ENCODE measurements at regions of chr6 and their contacts with region 1.

Region 1: GRCh38 chr6:126015863-126016262 is 29.5 kb downstream of the TRMT11 start:
- DNase-seq: no peak
- H3K4me3 ChIP-seq: no peak overlapping the region
- H3K27ac ChIP-seq: no peak overlapping the region
- H3K4me1 ChIP-seq: no peaks in the 10 kb centered on the region
- H3K27me3 ChIP-seq: no peaks in the 10 kb centered on the region
- CTCF ChIP-seq: no peak
- EP300 ChIP-seq: no peak
- POLR2A ChIP-seq: no peak
- RAD21 ChIP-seq: no peak

Region 2: DNA sequence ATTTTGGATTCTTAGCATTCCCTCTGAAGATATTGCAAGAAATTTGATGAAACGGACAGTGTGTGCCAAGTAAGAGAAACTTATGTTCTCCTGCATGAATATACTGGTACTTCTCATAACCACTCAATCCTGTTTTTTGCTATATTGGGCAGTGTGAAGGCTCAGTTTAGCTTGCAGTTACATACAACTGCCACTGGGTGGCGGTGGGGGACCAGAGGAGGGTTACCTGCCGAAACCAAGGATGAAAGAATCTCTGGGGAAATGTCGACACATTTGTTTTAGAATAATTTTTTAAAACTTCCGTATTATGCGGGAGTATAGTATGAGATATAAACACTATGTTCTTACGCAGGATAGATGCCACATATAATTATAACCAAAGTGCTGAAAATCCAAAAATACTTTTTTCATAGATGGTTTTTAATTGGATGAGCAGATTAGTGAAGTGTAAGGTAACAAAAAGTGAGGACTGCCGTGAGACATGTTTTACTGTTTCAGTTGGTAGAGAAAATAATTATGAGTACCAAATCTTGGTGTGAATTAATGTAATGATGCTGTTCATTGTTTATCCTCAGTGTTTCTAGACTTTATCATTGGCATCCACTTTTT is 19.8 kb before region 1 on chr6:
- CTCF ChIA-PET with region 1: interaction called, 39 read pairs
- POLR2A ChIA-PET with region 1: interaction called, 3 read pairs
- DNase-seq: peak in 1 of 2 experiments; percentile 77
- H3K4me3 ChIP-seq: no peak overlapping the region
- H3K27ac ChIP-seq: no peak overlapping the region
- H3K4me1 ChIP-seq: no peaks in the 10 kb centered on the region
- H3K27me3 ChIP-seq: no peaks in the 10 kb centered on the region
- CTCF ChIP-seq: peak; percentile 69 to 86 (median 75)
- EP300 ChIP-seq: no peak
- POLR2A ChIP-seq: no peak
- RAD21 ChIP-seq: peak; percentile 80 to 86

Measured in H1 (cell line).